HepG2 (cell line): ENCODE measurements at regions of chr15 and their contacts with region 1.

Region 1: DNA sequence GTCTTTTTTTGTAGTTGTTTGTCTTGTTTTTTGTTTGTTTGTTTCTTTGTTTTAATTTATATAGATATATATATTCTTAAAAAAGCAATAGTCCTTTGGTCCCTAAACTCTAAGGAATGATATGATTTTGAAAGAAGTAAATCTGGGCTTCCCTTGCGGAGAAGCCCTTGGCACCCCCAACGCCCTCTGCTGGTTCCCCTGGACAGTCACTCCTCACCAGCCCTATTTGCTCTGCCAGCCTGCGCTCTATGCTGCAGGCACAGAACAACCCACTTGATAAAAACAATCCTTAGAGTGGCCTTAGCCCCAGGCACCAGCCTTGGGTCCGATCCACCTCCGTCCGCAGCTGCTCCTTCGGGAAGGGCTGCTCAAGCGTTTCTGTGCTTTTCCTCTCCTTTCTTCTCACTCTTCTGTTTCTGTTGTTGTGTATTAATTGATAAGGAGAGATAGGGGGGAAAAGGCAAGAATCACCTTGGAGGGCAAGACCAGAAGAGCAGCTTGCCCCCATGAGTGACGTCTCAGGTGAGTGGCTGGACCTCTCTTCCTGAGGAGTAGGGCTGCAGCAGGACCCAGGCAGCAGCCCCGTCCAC is 13.7 kb upstream of the PARP6 start:
- DNase-seq: peak; percentile 28
- ATAC-seq: peak; percentile 77
- H3K4me3 ChIP-seq: no peak overlapping the region
- H3K27ac ChIP-seq: no peak overlapping the region
- H3K4me1 ChIP-seq: peaks cover 21% of the 10 kb centered on the region
- H3K27me3 ChIP-seq: no peaks in the 10 kb centered on the region
- CTCF ChIP-seq: peak; percentile 61
- EP300 ChIP-seq: no peak
- POLR2A ChIP-seq: no peak
- RAD21 ChIP-seq: peak; percentile 30; the same call in 1 of the 2 replicates

Region 2: DNA sequence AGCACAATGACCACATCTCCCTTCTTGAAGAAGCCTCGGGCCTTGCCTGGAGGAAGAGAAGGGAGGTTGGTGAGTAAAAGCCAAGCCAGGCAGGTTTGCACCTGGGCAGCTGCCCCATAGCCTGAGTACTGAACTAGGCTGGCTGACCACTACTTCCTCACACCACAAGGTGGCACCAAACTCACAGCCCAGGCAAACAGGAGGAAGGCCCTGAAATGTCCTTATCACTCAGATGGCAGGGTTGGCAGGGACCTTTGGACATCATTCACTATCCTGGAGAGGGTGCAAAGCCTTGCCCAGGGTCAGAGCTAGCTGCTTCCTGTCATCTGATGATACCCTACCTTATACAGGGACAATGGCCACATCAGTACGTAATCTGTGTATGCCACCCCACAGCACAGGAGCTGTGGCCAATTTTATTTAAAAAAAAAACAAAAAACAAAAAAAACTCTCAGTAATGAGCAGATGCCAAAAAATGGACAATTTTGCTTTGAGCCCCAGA is 86.3 kb before region 1 on chr15:
- CTCF ChIA-PET with region 1: interaction called, 35 read pairs
- POLR2A ChIA-PET with region 1: interaction called, 3 read pairs
- in situ Hi-C with region 1: loop called (anchors 5 kb)
- intact Hi-C with region 1: loop called (anchors 1 kb)
- DNase-seq: peak; percentile 76
- ATAC-seq: peak; percentile 59
- H3K4me3 ChIP-seq: no peak overlapping the region
- H3K27ac ChIP-seq: no peak overlapping the region
- H3K4me1 ChIP-seq: peaks cover 24% of the 10 kb centered on the region
- H3K27me3 ChIP-seq: peaks cover 6 to 11% of the 10 kb centered on the region in 2 experiments; a peak in 3 of 5 replicates
- CTCF ChIP-seq: peak; percentile 92
- EP300 ChIP-seq: 0 out of 4 replicates have a peak, but pooled peaks of 1 of the 2 experiments have one; percentile 11
- POLR2A ChIP-seq: no peak; a peak in 1 of 4 replicates
- RAD21 ChIP-seq: peak; percentile 90